WTC11 (cell line): ENCODE measurements at regions of chr3 and their contacts with region 1.

Region 1: GRCh38 chr3:109369510-109369909 is 32.2 kb upstream of the DPPA4 start:
- DNase-seq: peak; percentile 58
- ATAC-seq: peak; percentile 98
- H3K4me3 Mint-ChIP-seq: no peak overlapping the region
- H3K27ac Mint-ChIP-seq: no peak overlapping the region
- H3K4me1 Mint-ChIP-seq: peaks cover 12% of the 10 kb centered on the region
- H3K27me3 Mint-ChIP-seq: no peaks in the 10 kb centered on the region; the same call in 1 of the 2 replicates
- CTCF ChIP-seq: no peak

Region 2: GRCh38 chr3:109275702-109276293 is 93.7 kb before region 1 on chr3:
- CTCF ChIA-PET with region 1: interaction called, 17 read pairs
- POLR2A ChIA-PET with region 1: no interaction called
- DNase-seq: peak; percentile 64
- ATAC-seq: peak; percentile 94
- H3K4me3 Mint-ChIP-seq: no peak overlapping the region
- H3K27ac Mint-ChIP-seq: no peak overlapping the region
- H3K4me1 Mint-ChIP-seq: peaks cover 24% of the 10 kb centered on the region
- H3K27me3 Mint-ChIP-seq: no peaks in the 10 kb centered on the region
- CTCF ChIP-seq: peak; percentile 67